ENCODE measurements at regions of chr17 and their contacts with region 1.

Region 1: DNA sequence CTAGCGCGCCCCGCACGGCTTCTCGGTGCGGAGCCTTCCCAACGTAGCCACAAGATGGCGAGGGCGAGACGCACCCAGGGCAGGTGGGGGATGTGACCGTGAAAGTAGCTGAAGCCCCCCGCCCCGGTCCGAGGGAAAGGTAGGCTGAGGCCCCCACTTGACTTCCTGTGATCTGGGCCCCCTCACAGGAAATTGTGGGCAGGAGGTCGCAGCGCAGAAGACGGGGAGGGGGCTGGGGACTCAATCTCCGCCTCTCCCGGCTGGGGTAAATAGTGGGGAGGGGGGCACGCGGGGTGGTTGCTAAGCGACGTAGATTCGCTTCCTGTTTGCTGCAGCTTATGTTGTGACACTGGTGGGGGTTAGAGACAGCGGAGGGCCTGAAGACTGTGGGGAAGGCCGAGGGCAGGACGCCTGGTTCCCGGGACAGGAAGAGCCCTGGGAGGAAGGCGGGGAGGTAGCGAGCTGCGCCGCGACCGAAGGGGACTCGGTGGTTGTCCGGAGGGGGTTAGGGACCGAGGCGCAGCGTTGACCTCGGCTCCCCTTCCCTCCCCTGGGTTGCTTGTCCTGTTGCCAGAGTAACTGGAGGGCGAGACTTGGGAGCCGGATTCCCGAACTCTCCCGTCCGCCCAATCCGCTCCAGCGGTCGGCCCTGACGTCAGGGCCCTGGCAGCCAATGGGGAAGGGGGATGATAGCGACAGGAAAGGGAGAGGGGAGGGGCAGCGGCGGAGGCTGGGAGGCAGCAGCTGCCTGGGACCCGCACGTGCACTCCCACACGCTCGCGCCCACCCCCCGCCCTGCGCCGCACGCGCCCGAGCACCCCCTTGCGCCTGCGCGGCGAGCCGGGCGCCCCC is 1.2 kb downstream of the KDM6B start:
- DNase-seq: peak; percentile 79
- ATAC-seq: peak; percentile 47
- H3K4me3 Mint-ChIP-seq: peak overlapping the region; percentile 97
- H3K27ac Mint-ChIP-seq: peak overlapping the region; percentile 94
- H3K4me1 Mint-ChIP-seq: peaks cover 53% of the 10 kb centered on the region
- H3K27me3 Mint-ChIP-seq: peaks cover 14% of the 10 kb centered on the region
- CTCF ChIP-seq: no peak

Region 2: DNA sequence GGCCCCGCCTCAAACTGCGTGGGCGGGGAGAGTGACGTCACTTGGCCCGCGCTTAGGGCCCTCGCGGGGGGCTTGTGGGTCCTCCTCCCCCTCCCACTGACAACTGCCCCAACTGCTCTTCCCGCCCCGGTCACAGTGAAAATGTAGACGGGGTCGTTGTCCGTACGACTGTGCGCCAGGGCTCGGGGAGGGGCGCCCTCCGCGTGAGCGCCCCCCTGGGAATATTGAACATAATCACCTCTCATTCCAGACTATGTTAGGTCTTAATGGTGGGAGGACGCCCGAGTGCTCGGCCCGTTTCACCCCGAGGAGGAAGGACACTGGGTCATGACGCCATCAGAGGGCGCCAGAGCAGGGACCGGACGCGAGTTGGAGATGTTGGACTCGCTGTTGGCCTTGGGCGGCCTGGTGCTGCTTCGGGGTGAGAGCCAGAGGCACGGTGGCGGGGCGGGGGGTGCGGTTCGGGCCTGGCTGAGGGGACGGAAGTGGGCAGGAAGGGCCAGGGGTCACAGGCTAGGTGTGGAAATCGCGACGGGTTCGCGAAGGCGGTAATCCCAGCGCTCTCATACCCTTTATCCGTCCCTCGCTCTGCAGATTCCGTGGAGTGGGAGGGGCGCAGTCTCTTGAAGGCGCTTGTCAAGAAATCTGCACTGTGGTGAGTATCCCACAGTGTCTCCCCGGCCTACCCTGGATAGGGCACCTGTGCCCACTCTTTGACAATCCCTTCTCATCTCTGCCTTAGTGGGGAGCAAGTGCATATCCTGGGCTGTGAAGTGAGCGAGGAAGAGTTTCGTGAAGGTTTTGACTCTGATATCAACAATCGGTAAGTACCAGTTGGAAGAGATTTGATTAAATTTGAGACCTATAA is 582.8 kb before region 1 on chr17 and contains the start of gene ELP5:
- CTCF ChIA-PET with region 1: no interaction called
- POLR2A ChIA-PET with region 1: no interaction called
- intact Hi-C with region 1: loop called (anchors 2 kb)
- DNase-seq: no peak
- ATAC-seq: peak; percentile 61
- H3K4me3 Mint-ChIP-seq: peak within 1 kb of the TSS; percentile 98
- H3K27ac Mint-ChIP-seq: peak within 1 kb of the TSS; percentile 100
- H3K4me1 Mint-ChIP-seq: peaks cover 44% of the 10 kb centered on the region
- H3K27me3 Mint-ChIP-seq: no peaks in the 10 kb centered on the region
- CTCF ChIP-seq: no peak
- total RNA-seq, gene ELP5: 49.2 and 53.6 TPM in 2 replicates

Region 3: DNA sequence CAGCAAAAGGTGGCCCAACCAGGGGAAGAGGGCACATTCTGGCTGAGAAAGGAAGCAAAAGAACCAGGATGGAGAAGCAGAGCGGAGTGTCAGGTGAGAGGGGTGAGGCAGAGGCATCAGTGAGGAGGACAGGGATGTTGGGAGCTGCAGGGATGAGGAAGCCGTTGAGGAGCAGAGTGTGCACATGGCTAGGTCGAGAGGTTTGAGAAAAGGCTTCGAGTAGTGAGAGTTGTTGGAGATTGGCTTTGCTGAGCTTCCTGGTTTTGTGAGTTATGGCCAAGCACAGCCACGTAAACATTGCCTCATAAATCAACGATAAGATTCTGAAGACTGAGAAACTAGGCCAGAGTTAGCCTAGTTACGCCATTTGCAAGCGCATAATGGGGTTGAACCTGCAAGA is 90.8 kb before region 1 on chr17:
- CTCF ChIA-PET with region 1: interaction called, 3 read pairs
- POLR2A ChIA-PET with region 1: no interaction called
- intact Hi-C with region 1: loop called (anchors 1 kb)
- DNase-seq: no peak
- ATAC-seq: no peak
- H3K4me3 Mint-ChIP-seq: no peak overlapping the region
- H3K27ac Mint-ChIP-seq: no peak overlapping the region
- H3K4me1 Mint-ChIP-seq: no peaks in the 10 kb centered on the region
- H3K27me3 Mint-ChIP-seq: peaks cover 13% of the 10 kb centered on the region
- CTCF ChIP-seq: no peak

Region 4: DNA sequence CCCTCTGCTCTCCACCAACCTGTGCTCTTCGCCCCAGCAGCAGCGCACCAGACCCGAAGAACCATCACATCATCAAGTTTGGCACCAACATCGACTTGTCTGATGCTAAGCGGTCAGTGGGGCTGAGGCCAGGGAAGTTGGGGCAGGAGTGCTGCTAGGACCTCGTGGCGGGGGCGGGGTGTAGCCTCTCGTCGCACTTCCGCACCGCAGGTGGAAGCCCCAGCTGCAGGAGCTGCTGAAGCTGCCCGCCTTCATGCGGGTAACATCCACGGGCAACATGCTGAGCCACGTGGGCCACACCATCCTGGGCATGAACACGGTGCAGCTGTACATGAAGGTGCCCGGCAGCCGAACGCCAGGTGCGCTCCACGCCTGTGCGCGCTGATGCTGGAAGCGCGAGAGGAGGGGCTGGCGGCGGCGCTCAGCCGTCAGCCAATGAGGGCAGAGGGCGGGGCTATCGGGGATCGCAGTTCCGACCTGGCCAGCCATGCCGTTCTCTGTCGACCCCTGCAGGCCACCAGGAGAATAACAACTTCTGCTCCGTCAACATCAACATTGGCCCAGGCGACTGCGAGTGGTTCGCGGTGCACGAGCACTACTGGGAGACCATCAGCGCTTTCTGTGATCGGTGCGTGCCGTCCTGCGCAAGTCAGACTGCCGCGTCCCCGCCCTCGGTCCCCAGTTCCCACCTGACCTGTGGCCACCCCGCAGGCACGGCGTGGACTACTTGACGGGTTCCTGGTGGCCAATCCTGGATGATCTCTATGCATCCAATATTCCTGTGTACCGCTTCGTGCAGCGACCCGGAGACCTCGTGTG is 16.5 kb after region 1 on chr17:
- CTCF ChIA-PET with region 1: interaction called, 35 read pairs
- POLR2A ChIA-PET with region 1: interaction called, 74 read pairs
- intact Hi-C with region 1: loop called (anchors 1 kb)
- DNase-seq: peak; percentile 92
- ATAC-seq: peak; percentile 94
- H3K4me3 Mint-ChIP-seq: peak overlapping the region; percentile 62
- H3K27ac Mint-ChIP-seq: peak overlapping the region; percentile 71
- H3K4me1 Mint-ChIP-seq: peaks cover 37% of the 10 kb centered on the region
- H3K27me3 Mint-ChIP-seq: no peaks in the 10 kb centered on the region
- CTCF ChIP-seq: peak; percentile 39

Region 5: GRCh38 chr17:7887482-7888183 is 52.4 kb after region 1 on chr17:
- CTCF ChIA-PET with region 1: interaction called, 4 read pairs
- POLR2A ChIA-PET with region 1: interaction called, 3 read pairs
- intact Hi-C with region 1: loop called (anchors 2 kb)
- DNase-seq: peak; percentile 60
- ATAC-seq: peak; percentile 76
- H3K4me3 Mint-ChIP-seq: no peak overlapping the region
- H3K27ac Mint-ChIP-seq: no peak overlapping the region
- H3K4me1 Mint-ChIP-seq: peaks cover 8% of the 10 kb centered on the region
- H3K27me3 Mint-ChIP-seq: no peaks in the 10 kb centered on the region
- CTCF ChIP-seq: no peak

Measured in activated B cell treated with CpG ODN at 0.5 μM for 24 hours (primary cell).